Activated B cell treated with CpG ODN at 0.5 μM for 24 hours (primary cell): ENCODE measurements at regions of chr19 and their contacts with region 1.

Region 1: GRCh38 chr19:13880059-13881043 is 3.4 kb downstream of the NANOS3 start:
- DNase-seq: peak; percentile 97
- ATAC-seq: peak; percentile 99
- H3K4me3 Mint-ChIP-seq: peak overlapping the region; percentile 19
- H3K27ac Mint-ChIP-seq: peak overlapping the region; percentile 30
- H3K4me1 Mint-ChIP-seq: peaks cover 28% of the 10 kb centered on the region
- H3K27me3 Mint-ChIP-seq: peaks cover 3% of the 10 kb centered on the region
- CTCF ChIP-seq: peak; percentile 98

Region 2: GRCh38 chr19:13839130-13839937 is 41.0 kb before region 1 on chr19:
- CTCF ChIA-PET with region 1: no interaction called
- POLR2A ChIA-PET with region 1: no interaction called
- intact Hi-C with region 1: no loop called
- DNase-seq: peak; percentile 70
- ATAC-seq: peak; percentile 45
- H3K4me3 Mint-ChIP-seq: peak overlapping the region; percentile 86
- H3K27ac Mint-ChIP-seq: peak overlapping the region; percentile 92
- H3K4me1 Mint-ChIP-seq: peaks cover 75% of the 10 kb centered on the region
- H3K27me3 Mint-ChIP-seq: no peaks in the 10 kb centered on the region
- CTCF ChIP-seq: no peak

Region 3: DNA sequence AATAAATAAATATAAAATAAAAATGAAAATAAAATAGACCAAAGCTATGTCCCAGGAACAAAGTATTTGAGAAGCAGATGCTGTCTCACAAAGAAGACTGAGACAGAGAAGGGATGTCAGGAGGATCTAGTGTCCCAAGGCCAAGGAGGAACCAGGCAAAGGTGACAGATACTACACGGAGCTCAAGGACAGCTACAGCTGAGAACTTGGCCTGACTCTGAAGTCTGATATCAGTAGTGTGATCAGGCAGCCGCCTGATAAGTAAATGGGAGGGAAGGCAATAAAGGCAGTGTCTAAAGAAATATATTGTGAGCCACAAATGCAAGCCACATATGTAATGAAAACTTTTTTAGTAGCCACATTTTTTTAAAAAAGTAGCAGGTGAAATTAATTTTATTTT is 23.9 kb before region 1 on chr19:
- CTCF ChIA-PET with region 1: no interaction called
- POLR2A ChIA-PET with region 1: no interaction called
- intact Hi-C with region 1: no loop called
- DNase-seq: no peak
- ATAC-seq: no peak
- H3K4me3 Mint-ChIP-seq: no peak overlapping the region
- H3K27ac Mint-ChIP-seq: no peak overlapping the region
- H3K4me1 Mint-ChIP-seq: peaks cover 11% of the 10 kb centered on the region
- H3K27me3 Mint-ChIP-seq: no peaks in the 10 kb centered on the region
- CTCF ChIP-seq: no peak

Region 4: DNA sequence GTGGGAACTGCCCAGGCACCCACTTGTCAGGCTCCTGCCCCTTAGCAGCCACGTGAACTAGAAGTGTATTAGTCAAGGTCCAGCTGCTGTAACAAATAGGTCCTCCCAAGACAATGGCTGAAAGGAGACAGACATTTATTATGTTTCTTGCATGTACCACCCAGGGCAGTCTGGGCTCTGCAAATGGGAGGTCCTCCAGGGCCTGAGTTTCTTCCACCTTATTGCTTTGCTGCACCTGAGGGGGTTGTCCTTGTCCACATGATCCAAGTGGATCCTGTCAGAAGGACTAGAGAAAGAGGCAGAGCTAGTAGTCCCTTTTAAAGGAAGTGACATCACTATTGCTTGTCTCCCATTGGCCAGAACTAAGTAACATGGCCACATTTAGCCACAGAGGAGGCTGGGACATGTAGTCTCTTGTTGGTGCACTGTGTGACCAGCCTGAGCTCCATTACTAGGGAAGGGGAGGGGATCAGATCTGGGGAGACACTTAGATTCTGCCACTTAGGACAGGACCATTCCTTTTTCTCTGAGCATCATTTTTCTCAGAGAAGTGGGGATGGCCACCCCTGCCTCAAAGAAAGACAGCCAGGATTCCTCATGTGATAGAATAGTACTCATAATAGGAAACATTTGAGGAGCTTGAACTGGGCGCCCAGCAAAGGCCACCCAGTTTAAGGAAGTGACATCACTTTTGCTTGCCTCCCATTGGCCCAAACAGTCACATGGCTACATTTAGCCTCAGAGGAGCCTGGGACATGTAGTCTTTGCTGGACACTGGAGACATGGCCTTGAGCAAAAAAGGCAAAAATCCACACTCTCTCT is 40.8 kb after region 1 on chr19:
- CTCF ChIA-PET with region 1: no interaction called
- POLR2A ChIA-PET with region 1: no interaction called
- intact Hi-C with region 1: no loop called
- DNase-seq: no peak
- ATAC-seq: peak; percentile 82
- H3K4me3 Mint-ChIP-seq: no peak overlapping the region
- H3K27ac Mint-ChIP-seq: no peak overlapping the region
- H3K4me1 Mint-ChIP-seq: no peaks in the 10 kb centered on the region
- H3K27me3 Mint-ChIP-seq: no peaks in the 10 kb centered on the region
- CTCF ChIP-seq: no peak

Region 5: DNA sequence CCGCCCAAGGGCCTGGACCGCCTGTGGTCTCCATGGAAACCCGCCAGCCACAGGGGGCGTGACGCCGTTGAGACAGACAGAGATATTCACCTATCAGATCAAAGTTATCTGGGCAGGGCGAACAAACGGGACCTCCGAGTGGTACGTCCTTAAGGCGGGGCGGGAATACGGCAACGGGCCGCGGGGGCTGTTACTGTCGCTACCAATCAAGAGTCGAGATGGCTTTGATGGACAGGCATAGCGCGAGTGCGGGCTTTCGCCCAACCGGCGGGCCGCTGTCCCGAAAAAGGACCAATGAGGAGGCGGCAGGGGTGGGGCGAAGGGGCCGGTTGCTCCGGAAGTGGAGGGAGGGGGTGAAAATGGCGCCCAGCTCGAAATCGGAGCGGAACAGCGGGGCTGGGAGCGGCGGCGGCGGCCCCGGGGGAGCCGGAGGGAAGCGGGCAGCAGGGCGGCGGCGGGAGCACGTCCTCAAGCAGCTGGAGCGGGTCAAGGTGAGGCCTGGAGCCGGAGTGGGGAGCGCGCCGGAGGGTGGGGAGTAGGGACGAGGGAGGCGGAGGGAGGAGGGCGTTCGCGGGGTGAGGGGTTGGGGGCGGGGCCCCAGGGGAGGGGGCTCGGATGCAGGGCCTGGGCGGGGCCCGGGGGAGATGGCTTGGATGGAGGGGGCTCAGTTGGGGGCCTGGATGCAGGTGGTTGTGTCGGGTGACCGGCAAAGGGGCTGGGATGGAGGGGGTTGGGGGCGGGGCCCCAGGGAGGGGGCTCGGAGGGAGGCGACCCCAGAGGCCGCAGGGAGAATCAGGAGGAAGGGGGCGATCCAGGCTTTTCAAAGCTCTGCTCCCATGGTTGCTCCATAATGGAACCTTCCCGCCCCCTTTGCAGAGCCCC is 72.0 kb after region 1 on chr19 and contains the start of gene DCAF15:
- CTCF ChIA-PET with region 1: no interaction called
- POLR2A ChIA-PET with region 1: no interaction called
- intact Hi-C with region 1: loop called (anchors 2 kb)
- DNase-seq: peak; percentile 89
- ATAC-seq: peak; percentile 96
- H3K4me3 Mint-ChIP-seq: peak within 1 kb of the TSS; percentile 94
- H3K27ac Mint-ChIP-seq: peak within 1 kb of the TSS; percentile 90
- H3K4me1 Mint-ChIP-seq: peaks cover 18% of the 10 kb centered on the region
- H3K27me3 Mint-ChIP-seq: no peaks in the 10 kb centered on the region
- CTCF ChIP-seq: no peak
- total RNA-seq, gene DCAF15: 71.4 and 83.4 TPM in 2 replicates

Region 6: DNA sequence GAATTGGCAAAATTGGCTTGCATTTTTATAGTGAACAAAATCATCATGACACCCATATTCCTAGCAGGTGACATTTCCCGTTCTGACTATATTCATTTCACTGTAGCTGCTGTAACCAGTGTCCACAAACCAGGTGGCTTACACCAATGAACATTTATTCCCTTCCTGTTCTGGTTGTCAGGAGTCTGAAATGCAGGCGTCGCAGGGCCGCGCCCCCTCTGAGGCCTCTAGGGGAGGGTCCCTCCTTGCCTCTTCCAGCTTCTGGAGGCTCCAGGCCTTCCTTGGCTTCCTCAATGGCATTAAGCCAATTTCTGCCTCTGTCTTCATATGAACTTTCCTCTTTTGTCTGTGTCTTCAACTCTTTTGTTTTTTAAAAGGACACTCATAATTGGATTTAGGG is 141.1 kb after region 1 on chr19:
- CTCF ChIA-PET with region 1: no interaction called
- POLR2A ChIA-PET with region 1: no interaction called
- intact Hi-C with region 1: no loop called
- DNase-seq: no peak
- ATAC-seq: no peak
- H3K4me3 Mint-ChIP-seq: no peak overlapping the region
- H3K27ac Mint-ChIP-seq: peak overlapping the region; percentile 46
- H3K4me1 Mint-ChIP-seq: peaks cover 27% of the 10 kb centered on the region
- H3K27me3 Mint-ChIP-seq: no peaks in the 10 kb centered on the region
- CTCF ChIP-seq: no peak

Region 7: DNA sequence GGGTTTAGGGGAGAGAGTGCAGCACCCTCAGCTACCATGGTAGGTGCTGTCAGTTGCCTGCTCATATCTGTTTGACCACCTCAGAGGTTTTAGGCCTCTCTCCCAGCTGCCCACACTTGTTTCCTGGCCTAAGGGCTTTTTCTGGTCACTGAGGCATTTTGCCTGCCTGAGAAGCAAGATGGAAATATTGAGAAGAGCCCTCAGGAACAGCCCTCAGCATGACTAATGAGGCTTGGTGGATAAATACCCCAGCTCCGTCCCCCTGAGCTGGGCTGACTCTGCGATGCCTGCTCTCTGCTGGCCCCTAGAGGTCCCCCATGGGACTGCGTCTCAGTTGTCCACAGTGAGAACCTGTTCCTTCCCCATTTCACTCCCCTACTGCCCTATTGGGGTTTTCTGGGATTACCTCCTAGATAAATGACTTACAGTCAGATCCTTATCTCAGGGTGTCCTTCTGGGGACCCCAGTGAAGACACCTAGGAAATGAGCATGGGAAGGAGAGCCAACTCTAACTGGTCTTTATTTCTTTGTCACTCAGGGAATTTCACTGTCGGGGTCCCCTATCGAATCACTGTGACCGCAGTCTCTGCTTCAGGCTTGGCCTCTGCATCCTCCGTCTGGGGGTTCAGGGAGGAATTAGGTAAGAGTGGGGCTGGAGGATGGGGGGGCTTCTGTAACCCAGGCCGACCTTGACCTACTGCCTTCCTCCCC is 168.2 kb after region 1 on chr19:
- CTCF ChIA-PET with region 1: interaction called, 33 read pairs
- POLR2A ChIA-PET with region 1: interaction called, 5 read pairs
- intact Hi-C with region 1: loop called (anchors 1 kb)
- DNase-seq: peak; percentile 71
- ATAC-seq: peak; percentile 99
- H3K4me3 Mint-ChIP-seq: no peak overlapping the region
- H3K27ac Mint-ChIP-seq: no peak overlapping the region
- H3K4me1 Mint-ChIP-seq: no peaks in the 10 kb centered on the region
- H3K27me3 Mint-ChIP-seq: no peaks in the 10 kb centered on the region
- CTCF ChIP-seq: no peak

Region 8: DNA sequence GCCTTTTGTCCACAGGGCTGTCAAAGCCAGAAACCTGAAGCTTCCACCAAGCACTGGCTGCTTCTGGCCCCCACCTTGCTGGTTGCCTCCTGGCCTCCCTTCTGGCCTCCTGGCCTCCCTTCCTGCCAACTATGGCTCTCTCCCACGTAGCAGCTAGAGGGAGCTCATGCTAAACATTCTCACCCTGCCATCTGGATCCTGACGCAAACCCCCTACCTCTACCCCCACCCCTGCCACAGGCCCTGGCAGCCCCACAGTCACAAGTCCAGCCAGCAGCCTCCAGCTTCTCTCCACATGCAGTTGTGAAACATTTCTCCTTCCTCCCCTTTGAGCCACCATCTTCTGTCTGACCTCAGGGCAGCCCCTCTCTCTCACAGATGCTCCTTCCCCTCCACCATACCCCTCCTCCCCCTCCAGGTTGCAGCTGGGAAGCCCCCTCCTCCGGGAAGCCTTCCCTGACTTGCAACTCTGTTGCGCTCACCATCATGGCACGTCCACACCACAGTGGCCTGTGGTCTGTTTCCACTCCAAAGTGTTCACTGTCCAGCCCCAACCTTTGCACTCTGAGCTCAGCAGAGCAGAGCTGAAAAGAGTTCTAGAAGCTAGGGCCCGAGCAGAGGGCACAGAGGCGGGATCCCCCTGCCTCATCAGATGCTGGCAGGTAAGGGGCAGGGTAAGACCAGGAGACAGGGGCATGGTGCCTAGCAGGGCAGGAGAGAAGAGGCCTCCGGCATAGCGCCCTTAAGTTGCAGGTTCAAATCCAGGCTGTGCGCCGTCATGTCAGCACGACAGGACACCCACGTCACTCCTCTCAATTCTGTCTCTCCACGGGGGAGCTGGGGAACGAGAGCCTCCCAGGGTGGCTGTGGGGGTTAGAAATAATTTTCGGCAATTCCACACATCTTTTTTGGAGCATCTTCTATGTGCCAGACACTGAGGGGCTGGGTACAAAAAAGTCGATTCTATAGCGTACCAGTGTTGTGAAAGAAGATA is 318.3 kb after region 1 on chr19:
- CTCF ChIA-PET with region 1: no interaction called
- POLR2A ChIA-PET with region 1: no interaction called
- intact Hi-C with region 1: loop called (anchors 2 kb)
- DNase-seq: no peak
- ATAC-seq: no peak
- H3K4me3 Mint-ChIP-seq: no peak overlapping the region
- H3K27ac Mint-ChIP-seq: no peak overlapping the region
- H3K4me1 Mint-ChIP-seq: peaks cover 10% of the 10 kb centered on the region
- H3K27me3 Mint-ChIP-seq: peaks cover 5% of the 10 kb centered on the region
- CTCF ChIP-seq: no peak

Region 9: GRCh38 chr19:14472202-14472938 is 592.0 kb after region 1 on chr19:
- CTCF ChIA-PET with region 1: no interaction called
- POLR2A ChIA-PET with region 1: no interaction called
- intact Hi-C with region 1: loop called (anchors 1 kb)
- DNase-seq: peak; percentile 87
- ATAC-seq: peak; percentile 83
- H3K4me3 Mint-ChIP-seq: peak overlapping the region; percentile 24
- H3K27ac Mint-ChIP-seq: no peak overlapping the region
- H3K4me1 Mint-ChIP-seq: peaks cover 25% of the 10 kb centered on the region
- H3K27me3 Mint-ChIP-seq: peaks cover 28% of the 10 kb centered on the region
- CTCF ChIP-seq: peak; percentile 92